ENCODE measurements at regions of chr3 and their contacts with region 1.

Region 1: GRCh38 chr3:196655496-196655895 is 16.0 kb downstream of the NRROS start:
- DNase-seq: no peak
- ATAC-seq: no peak
- H3K4me3 Mint-ChIP-seq: no peak overlapping the region
- H3K27ac Mint-ChIP-seq: no peak overlapping the region
- H3K4me1 Mint-ChIP-seq: peaks cover 33% of the 10 kb centered on the region
- H3K27me3 Mint-ChIP-seq: no peaks in the 10 kb centered on the region
- CTCF ChIP-seq: no peak

Region 2: GRCh38 chr3:196645096-196645495 is 10.4 kb before region 1 on chr3:
- CTCF ChIA-PET with region 1: no interaction called
- POLR2A ChIA-PET with region 1: interaction called, 17 read pairs
- intact Hi-C with region 1: no loop called
- DNase-seq: no peak
- ATAC-seq: no peak
- H3K4me3 Mint-ChIP-seq: peak overlapping the region; percentile 35
- H3K27ac Mint-ChIP-seq: peak overlapping the region; percentile 99
- H3K4me1 Mint-ChIP-seq: peaks cover 84% of the 10 kb centered on the region
- H3K27me3 Mint-ChIP-seq: no peaks in the 10 kb centered on the region
- CTCF ChIP-seq: no peak

Measured in activated B cell treated with CpG ODN at 0.5 μM for 24 hours (primary cell).